ENCODE measurements at regions of chr7 and their contacts with region 1.

Region 1: GRCh38 chr7:52154382-52154781 is 837.8 kb upstream of the COBL start:
- DNase-seq: no peak
- ATAC-seq: no peak

Region 2: GRCh38 chr7:50544992-50545391 is 1609.4 kb before region 1 on chr7:
- intact Hi-C with region 1: no loop called
- DNase-seq: no peak
- ATAC-seq: no peak

Region 3: DNA sequence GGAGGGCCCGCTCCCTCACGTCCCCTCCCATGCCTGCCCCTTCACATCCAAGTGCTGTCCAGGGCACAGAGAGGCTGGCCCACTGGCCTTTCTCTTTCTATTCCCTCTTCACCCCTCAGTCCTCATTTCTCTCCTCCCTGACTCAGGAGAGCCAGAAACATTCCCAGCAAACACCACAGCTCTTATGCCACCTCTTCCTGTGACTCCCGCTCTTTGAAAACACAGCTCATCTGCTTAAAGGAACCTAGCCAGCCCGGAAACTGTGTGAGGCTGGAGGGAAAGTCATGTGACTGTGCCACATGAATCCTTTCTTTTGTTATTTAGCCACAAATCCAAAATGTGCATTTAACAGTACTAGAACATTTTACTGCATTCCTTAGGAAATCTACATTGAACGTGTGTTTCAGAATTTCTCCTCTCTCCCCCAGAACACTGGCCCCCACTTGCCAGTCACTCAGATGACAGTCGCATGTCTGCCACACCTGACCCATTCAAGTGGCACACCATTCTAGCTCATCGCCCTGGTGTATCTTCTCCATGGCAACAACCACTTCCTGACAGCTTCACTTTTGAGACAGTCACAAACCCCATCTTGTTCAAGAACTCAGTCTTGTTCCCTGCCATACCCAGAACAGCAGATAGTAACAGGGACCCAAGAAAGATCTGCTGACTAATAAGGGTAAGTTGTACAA is 1414.5 kb before region 1 on chr7:
- intact Hi-C with region 1: loop called (anchors 10 kb)
- DNase-seq: no peak
- ATAC-seq: no peak

Region 4: DNA sequence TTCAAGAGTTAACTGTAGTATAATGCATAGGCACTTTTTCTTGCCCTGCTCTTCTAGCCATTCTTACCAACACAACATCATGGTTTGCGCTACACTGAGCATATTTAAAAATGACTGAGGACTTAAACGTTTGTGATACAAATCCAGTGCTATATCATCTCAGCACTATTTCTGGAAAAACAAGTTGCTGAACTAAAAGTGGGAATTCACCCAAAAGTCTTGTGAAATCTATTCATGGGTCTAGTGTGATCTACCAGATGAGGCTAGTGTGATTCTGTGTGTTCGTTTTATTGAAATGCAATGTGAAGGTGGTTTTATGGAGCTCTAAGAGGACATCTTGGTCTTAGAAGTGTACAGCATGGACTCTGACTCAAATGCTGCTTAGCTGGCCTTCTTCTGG is 296.4 kb after region 1 on chr7:
- intact Hi-C with region 1: no loop called
- DNase-seq: no peak
- ATAC-seq: no peak